ENCODE measurements at regions of chr14 and their contacts with region 1.

Region 1: GRCh38 chr14:103613517-103613916 is 15.5 kb upstream of the KLC1 start:
- DNase-seq: no peak
- ATAC-seq: no peak
- H3K4me3 ChIP-seq: no peak overlapping the region
- H3K27ac ChIP-seq: no peak overlapping the region
- H3K4me1 ChIP-seq: no peaks in the 10 kb centered on the region
- H3K27me3 ChIP-seq: no peaks in the 10 kb centered on the region
- CTCF ChIP-seq: peak; percentile 17 to 49 (median 28); a peak in 3 of 6 replicates
- EP300 ChIP-seq: no peak
- POLR2A ChIP-seq: no peak
- RAD21 ChIP-seq: peak; percentile 34

Region 2: GRCh38 chr14:103679351-103679750 is 65.8 kb after region 1 on chr14:
- CTCF ChIA-PET with region 1: interaction called, 10 read pairs
- POLR2A ChIA-PET with region 1: no interaction called
- RAD21 ChIA-PET with region 1: no interaction called
- SMC1A ChIA-PET with region 1: no interaction called
- in situ Hi-C with region 1: no loop called
- intact Hi-C with region 1: no loop called
- DNase-seq: peak; percentile 34
- ATAC-seq: peak; percentile 100
- H3K4me3 ChIP-seq: no peak overlapping the region
- H3K27ac ChIP-seq: no peak overlapping the region; the same call in 1 of the 2 replicates
- H3K4me1 ChIP-seq: no peaks in the 10 kb centered on the region
- H3K27me3 ChIP-seq: no peaks in the 10 kb centered on the region
- CTCF ChIP-seq: peak; percentile 58 to 88 (median 78)
- EP300 ChIP-seq: no peak
- POLR2A ChIP-seq: peak; percentile 53; the same call in 1 of the 2 replicates
- RAD21 ChIP-seq: peak; percentile 42; the same call in 1 of the 2 replicates

Region 3: DNA sequence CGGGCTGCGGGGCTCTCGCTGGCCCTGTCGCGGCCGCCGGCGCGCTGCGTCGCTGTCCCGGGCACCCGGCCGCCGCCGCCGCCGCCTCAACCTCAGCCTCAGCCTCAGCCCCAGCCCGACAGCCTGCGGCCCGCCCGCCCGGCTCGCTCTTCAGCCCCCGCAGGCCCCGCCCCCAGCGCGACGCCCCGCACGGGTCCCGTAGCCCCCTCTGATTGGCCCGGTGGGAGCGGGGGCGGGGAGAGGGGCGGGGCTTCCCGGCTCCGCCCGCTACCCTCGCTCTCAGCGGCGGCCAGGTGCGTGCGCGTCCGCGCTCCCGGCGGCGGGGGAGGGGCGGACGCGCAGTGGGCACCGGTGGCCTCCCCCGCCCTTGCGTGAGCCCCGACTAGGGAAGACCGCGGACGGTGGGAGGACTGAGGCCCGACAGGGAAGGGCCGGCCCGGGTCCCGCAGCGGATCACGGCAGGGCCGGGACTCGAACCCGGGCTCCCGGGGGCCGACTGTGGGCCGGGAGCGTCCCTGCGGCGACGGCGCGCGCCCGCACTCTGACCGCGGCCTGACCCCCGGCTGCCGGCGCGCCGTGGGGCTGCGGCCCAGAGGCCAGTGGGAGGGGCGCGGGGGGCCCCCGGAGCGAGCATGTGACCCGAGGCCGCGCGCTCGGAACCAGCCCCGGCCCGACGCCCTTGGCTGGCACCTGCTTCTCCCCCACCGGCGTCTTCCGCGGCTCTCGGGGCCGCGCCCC is 234.1 kb after region 1 on chr14 and contains the start of gene PPP1R13B:
- CTCF ChIA-PET with region 1: no interaction called
- POLR2A ChIA-PET with region 1: no interaction called
- RAD21 ChIA-PET with region 1: no interaction called
- SMC1A ChIA-PET with region 1: no interaction called
- in situ Hi-C with region 1: no loop called
- intact Hi-C with region 1: no loop called
- DNase-seq: peak; percentile 40
- ATAC-seq: peak; percentile 96
- H3K4me3 ChIP-seq: peak within 1 kb of the TSS; percentile 92
- H3K27ac ChIP-seq: peak within 1 kb of the TSS; percentile 72
- H3K4me1 ChIP-seq: no peaks in the 10 kb centered on the region
- H3K27me3 ChIP-seq: no peaks in the 10 kb centered on the region
- CTCF ChIP-seq: no peak
- EP300 ChIP-seq: no peak
- POLR2A ChIP-seq: peak; percentile 65
- RAD21 ChIP-seq: no peak
- polyA plus RNA-seq, gene PPP1R13B: 0.16 to 0.40 TPM